ENCODE measurements at regions of chr10 and their contacts with region 1.

Region 1: GRCh38 chr10:102399217-102400089 is 3.9 kb downstream of the NFKB2 start:
- DNase-seq: peak; percentile 80
- ATAC-seq: peak; percentile 75
- H3K4me3 ChIP-seq: peak overlapping the region; percentile 45 to 63
- H3K27ac ChIP-seq: peak overlapping the region; percentile 52
- H3K4me1 ChIP-seq: peaks cover 21 to 73% of the 10 kb centered on the region in 2 experiments
- H3K27me3 ChIP-seq: no peaks in the 10 kb centered on the region
- CTCF ChIP-seq: peak in 2 of 3 experiments; percentile 97 to 99; a peak in 4 of 6 replicates
- POLR2A ChIP-seq: peak; percentile 67
- RAD21 ChIP-seq: no peak

Region 2: DNA sequence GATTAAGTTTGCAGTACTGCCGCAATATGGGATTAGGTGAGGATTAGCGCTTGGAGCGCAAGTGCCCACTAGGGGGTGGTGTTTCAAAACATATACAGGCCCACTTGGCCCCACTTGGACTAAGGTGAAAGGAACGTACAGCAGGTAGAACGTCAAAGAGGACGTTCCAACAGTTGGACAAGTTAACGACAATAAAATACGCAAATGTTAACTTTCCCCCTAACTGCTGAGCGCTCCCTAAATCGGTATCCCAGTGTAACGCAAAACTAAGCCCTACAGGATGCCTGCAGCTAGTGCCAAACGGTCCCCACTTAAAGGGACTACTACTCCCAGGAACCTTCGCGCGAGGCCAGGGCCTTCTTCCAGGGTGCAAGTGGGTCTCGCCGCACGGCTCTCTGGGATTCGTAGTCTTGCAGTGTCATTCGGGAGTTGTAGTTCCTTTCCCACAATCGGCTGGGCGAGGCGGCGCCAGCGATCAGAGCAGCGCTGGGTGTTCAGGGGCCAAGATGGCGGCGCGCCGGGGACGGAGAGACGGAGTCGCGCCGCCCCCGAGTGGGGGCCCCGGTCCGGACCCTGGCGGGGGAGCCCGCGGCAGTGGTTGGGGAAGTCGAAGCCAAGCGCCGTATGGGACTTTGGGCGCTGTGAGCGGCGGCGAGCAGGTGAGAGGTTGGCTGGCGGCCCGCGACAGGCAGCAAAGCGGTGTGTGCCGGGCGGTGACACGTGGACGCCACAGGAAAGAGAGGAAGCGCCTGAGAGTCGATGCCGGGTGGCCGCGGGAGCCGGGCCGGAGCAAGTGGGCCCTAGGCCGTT is 266.7 kb before region 1 on chr10 and contains the start of gene PPRC1:
- CTCF ChIA-PET with region 1: no interaction called
- POLR2A ChIA-PET with region 1: no interaction called
- RAD21 ChIA-PET with region 1: no interaction called
- intact Hi-C with region 1: no loop called
- DNase-seq: peak; percentile 100
- ATAC-seq: peak; percentile 92
- H3K4me3 ChIP-seq: peak within 1 kb of the TSS; percentile 93
- H3K27ac ChIP-seq: peak within 1 kb of the TSS; percentile 98
- H3K4me1 ChIP-seq: peaks cover 27 to 41% of the 10 kb centered on the region in 2 experiments
- H3K27me3 ChIP-seq: no peaks in the 10 kb centered on the region
- CTCF ChIP-seq: peak in 2 of 3 experiments; percentile 96 to 99; a peak in 4 of 6 replicates
- POLR2A ChIP-seq: peak; percentile 74
- RAD21 ChIP-seq: no peak
- total RNA-seq, gene PPRC1: 93.0 TPM

Region 3: GRCh38 chr10:102167861-102168260 is 231.6 kb before region 1 on chr10:
- CTCF ChIA-PET with region 1: interaction called, 17 read pairs
- POLR2A ChIA-PET with region 1: interaction called, 6 read pairs
- RAD21 ChIA-PET with region 1: interaction called, 3 to 6 read pairs
- intact Hi-C with region 1: loop called (anchors 1 kb)
- DNase-seq: no peak
- ATAC-seq: no peak
- H3K4me3 ChIP-seq: no peak overlapping the region
- H3K27ac ChIP-seq: no peak overlapping the region
- H3K4me1 ChIP-seq: peaks cover 4 to 6% of the 10 kb centered on the region in 2 experiments; a peak in 2 of 4 replicates
- H3K27me3 ChIP-seq: no peaks in the 10 kb centered on the region
- CTCF ChIP-seq: no peak
- POLR2A ChIP-seq: no peak
- RAD21 ChIP-seq: no peak

Region 4: DNA sequence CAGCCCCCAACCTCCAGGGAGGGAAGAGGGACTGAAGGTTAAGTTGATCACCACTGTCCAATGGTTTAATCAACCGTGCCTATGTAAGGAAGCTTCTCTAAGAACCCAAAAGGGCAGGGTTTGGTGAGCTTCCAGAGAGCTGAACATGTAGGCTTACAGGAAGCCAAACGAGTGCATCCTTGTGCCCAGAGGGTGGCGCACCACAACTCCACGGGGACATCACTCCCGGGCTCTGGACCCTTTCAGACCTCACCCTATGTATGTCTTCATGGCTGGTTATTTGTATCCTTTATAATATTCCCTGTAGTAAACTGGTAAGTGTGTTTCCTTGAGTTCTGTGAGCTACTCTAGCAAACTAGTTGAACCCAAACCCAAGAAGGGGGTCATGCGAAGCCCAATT is 15.4 kb before region 1 on chr10:
- CTCF ChIA-PET with region 1: interaction called, 26 read pairs
- POLR2A ChIA-PET with region 1: interaction called, 3 read pairs
- RAD21 ChIA-PET with region 1: interaction called in 1 of 2 experiments, 5 read pairs
- intact Hi-C with region 1: no loop called
- DNase-seq: no peak
- ATAC-seq: peak; percentile 74
- H3K4me3 ChIP-seq: no peak overlapping the region
- H3K27ac ChIP-seq: no peak overlapping the region
- H3K4me1 ChIP-seq: no peaks in the 10 kb centered on the region
- H3K27me3 ChIP-seq: no peaks in the 10 kb centered on the region
- CTCF ChIP-seq: peak; percentile 34 to 61 (median 45); a peak in 5 of 6 replicates
- POLR2A ChIP-seq: no peak
- RAD21 ChIP-seq: peak; percentile 46

Measured in HCT116 (cell line).